ENCODE measurements at regions of chr7 and their contacts with region 1.

Region 1: DNA sequence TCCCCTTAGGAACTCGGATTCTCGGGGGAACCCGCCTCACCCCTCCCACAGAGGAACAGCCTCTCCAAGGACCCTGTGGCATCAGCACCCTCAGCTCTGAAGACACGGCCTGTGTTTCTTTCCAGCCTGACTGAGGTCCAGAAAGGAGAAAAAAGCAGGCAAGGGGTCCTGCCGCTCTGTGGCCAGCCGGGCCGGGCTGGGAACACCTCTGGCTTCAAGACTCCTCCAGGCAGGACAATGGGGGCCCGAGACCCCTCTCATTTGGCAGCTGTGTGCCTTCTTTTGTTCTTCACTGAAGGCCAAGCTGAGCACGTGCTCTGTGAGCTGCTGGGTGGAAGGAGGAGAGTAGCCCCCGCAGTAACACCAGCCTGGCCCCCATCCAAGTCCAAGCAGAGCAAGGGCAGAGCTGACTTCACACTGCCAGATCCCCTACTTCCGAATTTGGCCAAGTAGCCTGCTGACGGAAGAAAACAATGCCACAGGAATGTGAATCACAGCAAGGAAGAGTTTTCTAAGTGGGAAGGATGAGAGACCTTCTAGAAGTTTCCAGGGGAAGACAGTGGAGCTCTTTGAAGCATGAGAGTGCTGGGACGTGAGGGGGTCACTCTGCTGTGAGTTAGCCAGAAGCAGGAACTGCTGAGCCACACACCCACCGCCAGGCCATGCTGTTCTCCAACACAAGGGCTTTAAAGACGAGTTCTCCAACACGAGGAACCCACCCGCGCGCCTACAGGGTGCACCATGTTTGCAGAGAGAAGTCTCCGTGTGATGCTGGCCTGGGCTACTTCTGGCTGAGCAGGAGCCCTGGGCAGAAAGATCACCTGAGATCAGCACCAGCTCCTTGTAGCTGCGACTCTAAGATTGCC is 3.1 kb downstream of the CNPY1 start:
- DNase-seq: peak; percentile 34
- ATAC-seq: peak; percentile 80
- H3K4me3 ChIP-seq: no peak overlapping the region
- H3K27ac ChIP-seq: no peak overlapping the region
- H3K4me1 ChIP-seq: no peaks in the 10 kb centered on the region
- H3K27me3 ChIP-seq: peaks cover 8 to 81% of the 10 kb centered on the region in 2 experiments; a peak in 4 of 5 replicates
- CTCF ChIP-seq: peak; percentile 67
- EP300 ChIP-seq: no peak
- POLR2A ChIP-seq: no peak
- RAD21 ChIP-seq: peak; percentile 55

Region 2: GRCh38 chr7:155738652-155739537 is 195.7 kb after region 1 on chr7:
- CTCF ChIA-PET with region 1: interaction called, 7 read pairs
- POLR2A ChIA-PET with region 1: no interaction called
- in situ Hi-C with region 1: no loop called
- intact Hi-C with region 1: loop called (anchors 1 kb)
- DNase-seq: peak; percentile 74
- ATAC-seq: peak; percentile 90
- H3K4me3 ChIP-seq: no peak overlapping the region
- H3K27ac ChIP-seq: no peak overlapping the region
- H3K4me1 ChIP-seq: no peaks in the 10 kb centered on the region
- H3K27me3 ChIP-seq: no peaks in the 10 kb centered on the region
- CTCF ChIP-seq: peak; percentile 84
- EP300 ChIP-seq: no peak
- POLR2A ChIP-seq: no peak
- RAD21 ChIP-seq: peak; percentile 80

Region 3: GRCh38 chr7:155763691-155764437 is 220.6 kb after region 1 on chr7:
- CTCF ChIA-PET with region 1: no interaction called
- POLR2A ChIA-PET with region 1: no interaction called
- in situ Hi-C with region 1: no loop called
- intact Hi-C with region 1: loop called (anchors 1 kb)
- DNase-seq: no peak
- ATAC-seq: no peak
- H3K4me3 ChIP-seq: no peak overlapping the region
- H3K27ac ChIP-seq: no peak overlapping the region
- H3K4me1 ChIP-seq: no peaks in the 10 kb centered on the region
- H3K27me3 ChIP-seq: no peaks in the 10 kb centered on the region
- CTCF ChIP-seq: no peak
- EP300 ChIP-seq: no peak
- POLR2A ChIP-seq: no peak
- RAD21 ChIP-seq: no peak